ENCODE measurements at regions of chr10 and their contacts with region 1.

Region 1: GRCh38 chr10:70355051-70356021 is 27.1 kb downstream of the LRRC20 start:
- DNase-seq: peak; percentile 94
- ATAC-seq: peak; percentile 79
- H3K4me3 ChIP-seq: peak overlapping the region; percentile 36
- H3K27ac ChIP-seq: peak overlapping the region; percentile 88
- H3K4me1 ChIP-seq: peaks cover 51% of the 10 kb centered on the region
- H3K27me3 ChIP-seq: no peaks in the 10 kb centered on the region
- CTCF ChIP-seq: no peak
- EP300 ChIP-seq: peak; percentile 52 to 98
- POLR2A ChIP-seq: peak; percentile 46
- RAD21 ChIP-seq: no peak

Region 2: DNA sequence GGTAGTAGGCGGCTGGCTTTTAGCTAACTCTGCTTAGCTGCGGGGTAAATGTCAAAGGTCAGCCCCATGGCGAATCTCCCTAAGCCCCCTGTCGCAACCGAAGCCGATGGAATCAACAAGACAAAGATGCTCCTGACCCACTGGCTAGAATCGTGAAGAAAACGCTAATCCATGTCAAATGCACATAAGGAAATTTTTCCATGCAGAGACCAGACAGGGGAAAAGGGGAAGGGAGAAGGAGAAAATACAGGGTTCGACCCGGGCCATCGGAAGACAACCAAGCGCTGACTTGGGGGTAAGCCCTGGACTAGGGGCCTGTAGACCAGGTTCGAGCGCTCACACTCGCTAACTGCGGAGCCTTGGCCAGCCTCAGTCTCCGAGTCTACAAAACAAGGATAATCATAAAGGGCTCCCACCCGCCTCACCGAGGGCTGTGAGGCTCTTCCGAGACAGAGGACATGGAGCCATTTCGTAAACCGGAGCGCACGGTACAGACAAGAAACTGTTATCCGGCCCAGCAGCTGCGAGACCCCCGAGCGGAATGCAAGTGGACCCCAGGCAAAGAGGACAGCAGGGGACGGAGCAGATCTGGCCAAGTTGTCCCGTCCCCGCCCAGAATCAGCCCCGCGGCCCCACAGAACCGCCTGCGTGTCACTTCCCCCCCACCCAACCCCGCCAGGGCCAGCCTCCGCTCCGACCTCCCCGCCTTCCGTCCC is 185.5 kb before region 1 on chr10:
- CTCF ChIA-PET with region 1: interaction called, 4 read pairs
- POLR2A ChIA-PET with region 1: interaction called, 3 read pairs
- RAD21 ChIA-PET with region 1: interaction called, 3 read pairs
- SMC1A ChIA-PET with region 1: interaction called, 8 read pairs
- in situ Hi-C with region 1: no loop called
- intact Hi-C with region 1: loop called (anchors 5 kb)
- DNase-seq: no peak
- ATAC-seq: peak; percentile 35
- H3K4me3 ChIP-seq: peak overlapping the region; percentile 91
- H3K27ac ChIP-seq: peak overlapping the region; percentile 56
- H3K4me1 ChIP-seq: peaks cover 11% of the 10 kb centered on the region
- H3K27me3 ChIP-seq: no peaks in the 10 kb centered on the region
- CTCF ChIP-seq: no peak
- EP300 ChIP-seq: no peak
- POLR2A ChIP-seq: no peak
- RAD21 ChIP-seq: no peak

Region 3: DNA sequence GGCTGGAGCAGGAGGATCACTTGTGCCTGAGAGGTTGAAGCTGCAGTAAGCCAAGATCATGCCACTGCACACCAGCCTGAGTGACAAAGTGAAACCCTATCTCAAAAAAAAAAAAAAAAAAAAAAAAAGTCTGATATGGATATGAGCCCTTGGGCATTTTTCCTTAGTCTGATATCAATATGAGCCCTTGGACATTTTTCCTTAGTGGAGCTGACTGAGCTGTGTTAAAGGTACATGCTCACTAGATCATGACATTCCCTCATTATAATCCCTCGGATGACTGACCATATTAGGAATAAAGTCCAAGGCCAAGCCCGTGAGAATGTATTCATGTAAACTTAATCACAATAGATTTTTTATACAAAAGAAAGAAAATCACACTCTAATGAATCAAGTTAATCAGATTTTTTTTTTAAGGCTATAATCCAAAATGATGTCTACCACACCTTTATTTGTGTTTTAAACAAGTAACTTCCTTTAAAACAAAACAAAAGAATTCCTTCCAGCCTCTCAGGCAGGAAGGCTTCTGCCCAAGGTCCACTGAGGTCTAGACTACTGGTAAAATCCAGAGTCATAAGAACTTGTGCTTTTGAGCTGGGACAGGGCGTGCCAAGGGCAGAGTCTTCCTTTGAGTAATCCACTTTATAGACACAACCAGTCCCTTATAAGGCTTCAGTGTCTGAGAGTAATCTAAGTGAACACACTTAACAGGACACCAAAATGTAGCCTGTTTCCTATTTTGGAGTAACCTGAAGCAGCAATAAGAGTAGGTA is 127.6 kb before region 1 on chr10:
- CTCF ChIA-PET with region 1: interaction called, 611 read pairs
- POLR2A ChIA-PET with region 1: interaction called, 24 read pairs
- RAD21 ChIA-PET with region 1: interaction called, 675 read pairs
- SMC1A ChIA-PET with region 1: interaction called, 408 read pairs
- in situ Hi-C with region 1: loop called (anchors 5 kb)
- intact Hi-C with region 1: no loop called
- DNase-seq: no peak
- ATAC-seq: peak; percentile 35
- H3K4me3 ChIP-seq: no peak overlapping the region
- H3K27ac ChIP-seq: no peak overlapping the region
- H3K4me1 ChIP-seq: peaks cover 10% of the 10 kb centered on the region
- H3K27me3 ChIP-seq: no peaks in the 10 kb centered on the region
- CTCF ChIP-seq: no peak
- EP300 ChIP-seq: no peak
- POLR2A ChIP-seq: no peak
- RAD21 ChIP-seq: no peak

Region 4: GRCh38 chr10:70233109-70233938 is 122.0 kb before region 1 on chr10 and contains the start of gene PPA1:
- CTCF ChIA-PET with region 1: interaction called, 611 read pairs
- POLR2A ChIA-PET with region 1: interaction called, 24 read pairs
- RAD21 ChIA-PET with region 1: interaction called, 675 read pairs
- SMC1A ChIA-PET with region 1: interaction called, 408 read pairs
- in situ Hi-C with region 1: loop called (anchors 5 kb)
- intact Hi-C with region 1: no loop called
- DNase-seq: peak; percentile 80
- ATAC-seq: peak; percentile 92
- H3K4me3 ChIP-seq: peak within 1 kb of the TSS; percentile 93
- H3K27ac ChIP-seq: peak within 1 kb of the TSS; percentile 76
- H3K4me1 ChIP-seq: no peaks in the 10 kb centered on the region
- H3K27me3 ChIP-seq: no peaks in the 10 kb centered on the region
- CTCF ChIP-seq: peak in 2 of 3 experiments; percentile 20 to 31; a peak in 3 of 6 replicates
- EP300 ChIP-seq: no peak
- POLR2A ChIP-seq: peak; percentile 95
- RAD21 ChIP-seq: no peak
- polyA plus RNA-seq, gene PPA1: 224 to 386 TPM

Region 5: DNA sequence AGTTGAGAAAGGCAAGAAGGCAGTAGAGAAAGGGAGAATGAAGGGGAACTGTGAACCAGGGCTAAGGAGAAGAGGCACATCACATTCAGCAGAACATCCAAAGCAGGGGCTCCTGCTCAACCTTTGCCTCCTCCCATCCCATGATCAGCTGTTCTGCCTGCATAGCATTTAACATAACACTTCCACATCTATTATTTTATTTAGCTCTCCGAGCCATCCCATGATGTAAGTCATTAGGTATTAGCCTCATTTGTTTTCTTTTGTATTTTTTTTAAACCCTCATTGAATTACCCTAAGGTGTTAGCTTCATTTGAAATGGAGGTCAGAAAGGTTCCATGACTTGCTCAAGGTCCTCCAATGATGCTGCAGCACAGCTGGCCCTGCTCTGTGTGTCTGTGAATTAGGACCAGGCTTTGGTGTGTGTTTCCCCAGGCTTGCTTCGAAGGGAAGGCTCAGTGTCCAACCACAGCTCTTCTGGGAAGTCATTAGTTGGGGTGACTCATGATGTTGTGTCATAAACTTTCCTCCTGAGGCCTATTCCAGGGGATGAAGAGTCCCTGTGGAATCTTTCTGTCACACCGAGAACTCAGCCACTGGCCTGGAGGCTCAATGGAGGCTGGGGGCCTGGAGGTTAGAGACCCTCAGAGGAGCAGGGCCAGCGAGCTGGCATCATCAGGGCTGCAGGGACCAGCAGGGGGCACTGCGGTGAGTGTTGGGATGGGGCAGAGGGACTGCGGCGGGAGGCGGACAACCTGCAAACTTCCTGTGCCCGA is 88.0 kb before region 1 on chr10:
- CTCF ChIA-PET with region 1: interaction called, 756 read pairs
- POLR2A ChIA-PET with region 1: interaction called, 6 read pairs
- RAD21 ChIA-PET with region 1: interaction called, 180 read pairs
- SMC1A ChIA-PET with region 1: interaction called, 274 read pairs
- in situ Hi-C with region 1: loop called (anchors 5 kb)
- intact Hi-C with region 1: loop called (anchors 2 kb)
- DNase-seq: no peak
- ATAC-seq: peak; percentile 35
- H3K4me3 ChIP-seq: no peak overlapping the region
- H3K27ac ChIP-seq: no peak overlapping the region
- H3K4me1 ChIP-seq: peaks cover 16% of the 10 kb centered on the region
- H3K27me3 ChIP-seq: no peaks in the 10 kb centered on the region
- CTCF ChIP-seq: peak; percentile 10 to 41 (median 27); a peak in 4 of 6 replicates
- EP300 ChIP-seq: no peak
- POLR2A ChIP-seq: no peak
- RAD21 ChIP-seq: no peak

Region 6: GRCh38 chr10:70293169-70293813 is 62.0 kb before region 1 on chr10:
- CTCF ChIA-PET with region 1: interaction called, 13 read pairs
- POLR2A ChIA-PET with region 1: interaction called, 14 read pairs
- RAD21 ChIA-PET with region 1: interaction called, 23 read pairs
- SMC1A ChIA-PET with region 1: interaction called, 45 read pairs
- in situ Hi-C with region 1: no loop called
- intact Hi-C with region 1: no loop called
- DNase-seq: peak; percentile 71
- ATAC-seq: peak; percentile 96
- H3K4me3 ChIP-seq: no peak overlapping the region
- H3K27ac ChIP-seq: peak overlapping the region; percentile 41
- H3K4me1 ChIP-seq: peaks cover 16% of the 10 kb centered on the region
- H3K27me3 ChIP-seq: no peaks in the 10 kb centered on the region
- CTCF ChIP-seq: no peak
- EP300 ChIP-seq: peak; percentile 77 to 84; a peak in 3 of 4 replicates
- POLR2A ChIP-seq: no peak
- RAD21 ChIP-seq: no peak

Region 7: GRCh38 chr10:70417568-70417967 is 62.2 kb after region 1 on chr10:
- CTCF ChIA-PET with region 1: no interaction called
- POLR2A ChIA-PET with region 1: no interaction called
- RAD21 ChIA-PET with region 1: no interaction called
- SMC1A ChIA-PET with region 1: no interaction called
- in situ Hi-C with region 1: no loop called
- intact Hi-C with region 1: no loop called
- DNase-seq: no peak
- ATAC-seq: peak; percentile 38; the same call in 2 of the 3 replicates
- H3K4me3 ChIP-seq: no peak overlapping the region
- H3K27ac ChIP-seq: peak overlapping the region; percentile 24; the same call in 1 of the 2 replicates
- H3K4me1 ChIP-seq: peaks cover 20% of the 10 kb centered on the region
- H3K27me3 ChIP-seq: no peaks in the 10 kb centered on the region
- CTCF ChIP-seq: no peak
- EP300 ChIP-seq: no peak
- POLR2A ChIP-seq: no peak
- RAD21 ChIP-seq: no peak